Activated naive CD4-positive, alpha-beta T cell treated with anti-CD3 and anti-CD28 coated beads for 36 hours (primary cell): ENCODE measurements at regions of chr17 and their contacts with region 1.

Region 1: GRCh38 chr17:36072431-36073121 is 8.5 kb downstream of the CCL18 start:
- DNase-seq: peak; percentile 81
- H3K4me3 Mint-ChIP-seq: no peak overlapping the region
- H3K27ac Mint-ChIP-seq: no peak overlapping the region
- H3K4me1 Mint-ChIP-seq: peaks cover 5% of the 10 kb centered on the region
- H3K27me3 Mint-ChIP-seq: peaks cover 8% of the 10 kb centered on the region

Region 2: DNA sequence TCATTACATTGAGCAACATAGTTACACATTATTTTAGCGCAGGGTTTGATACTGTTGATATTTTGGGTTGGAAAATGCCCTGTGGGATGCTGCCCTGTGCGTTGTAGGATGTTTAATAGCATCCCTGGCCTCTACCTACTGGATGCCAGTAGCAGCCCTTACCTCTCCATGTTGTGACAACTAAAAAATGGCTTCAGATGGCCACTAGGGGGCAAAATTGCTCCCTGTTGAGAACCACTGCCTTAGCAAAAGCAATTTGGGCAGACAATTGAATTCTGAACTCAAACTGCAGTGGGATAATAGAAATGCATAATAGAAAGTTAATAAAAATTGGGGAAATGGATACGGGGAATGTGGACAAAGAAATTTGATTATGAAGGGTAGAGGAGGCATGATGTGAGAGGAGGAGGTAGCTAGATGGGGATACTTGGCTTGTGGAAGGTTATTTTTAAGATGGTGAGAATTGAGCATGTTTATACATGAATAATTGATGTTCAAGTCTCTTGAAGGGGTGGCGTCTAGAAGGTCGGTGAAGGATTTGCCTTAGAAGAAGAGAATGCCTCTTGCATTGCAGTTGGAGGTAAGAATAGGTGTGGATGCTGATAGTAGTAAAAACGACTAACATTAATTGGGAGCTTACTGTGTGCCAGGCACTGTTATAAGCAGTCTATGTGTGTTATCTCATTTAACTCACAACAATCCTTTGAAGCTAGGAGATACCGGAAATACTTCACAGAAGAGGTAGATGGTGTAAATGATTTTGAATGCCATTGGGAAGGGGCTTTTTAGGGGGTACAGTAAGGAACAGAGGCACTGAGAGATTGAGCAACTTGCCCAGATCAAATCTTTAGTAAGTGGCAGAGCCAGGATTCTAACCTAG is 222.9 kb before region 1 on chr17:
- CTCF ChIA-PET with region 1: interaction called, 4 read pairs
- intact Hi-C with region 1: loop called (anchors 10 kb)
- DNase-seq: peak; percentile 72
- H3K4me3 Mint-ChIP-seq: no peak overlapping the region
- H3K27ac Mint-ChIP-seq: no peak overlapping the region
- H3K4me1 Mint-ChIP-seq: no peaks in the 10 kb centered on the region
- H3K27me3 Mint-ChIP-seq: no peaks in the 10 kb centered on the region

Region 3: GRCh38 chr17:35879773-35880654 is 192.6 kb before region 1 on chr17 and contains the start of gene CCL5:
- CTCF ChIA-PET with region 1: no interaction called
- intact Hi-C with region 1: no loop called
- DNase-seq: peak; percentile 37
- H3K4me3 Mint-ChIP-seq: no peak within 1 kb of the TSS
- H3K27ac Mint-ChIP-seq: peak within 1 kb of the TSS; percentile 46
- H3K4me1 Mint-ChIP-seq: peaks cover 17% of the 10 kb centered on the region
- H3K27me3 Mint-ChIP-seq: no peaks in the 10 kb centered on the region
- total RNA-seq, gene CCL5: 1.9 to 2.5 TPM

Region 4: GRCh38 chr17:35969558-35970380 is 102.8 kb before region 1 on chr17:
- CTCF ChIA-PET with region 1: interaction called, 44 read pairs
- intact Hi-C with region 1: loop called (anchors 2 kb)
- DNase-seq: peak; percentile 90
- H3K4me3 Mint-ChIP-seq: no peak overlapping the region
- H3K27ac Mint-ChIP-seq: no peak overlapping the region
- H3K4me1 Mint-ChIP-seq: no peaks in the 10 kb centered on the region
- H3K27me3 Mint-ChIP-seq: peaks cover 2% of the 10 kb centered on the region

Region 5: GRCh38 chr17:36089888-36090836 is 17.6 kb after region 1 on chr17 and contains the start of gene CCL3:
- CTCF ChIA-PET with region 1: interaction called, 13 read pairs
- intact Hi-C with region 1: no loop called
- DNase-seq: peak; percentile 54
- H3K4me3 Mint-ChIP-seq: no peak within 1 kb of the TSS
- H3K27ac Mint-ChIP-seq: peak within 1 kb of the TSS; percentile 68
- H3K4me1 Mint-ChIP-seq: peaks cover 23% of the 10 kb centered on the region
- H3K27me3 Mint-ChIP-seq: peaks cover 25% of the 10 kb centered on the region
- total RNA-seq, gene CCL3: 8.3 TPM